ENCODE measurements at regions of chr2 and their contacts with region 1.

Region 1: GRCh38 chr2:226791487-226792081 is 8.0 kb downstream of the IRS1 start:
- DNase-seq: peak; percentile 86
- H3K4me3 Mint-ChIP-seq: peak overlapping the region; percentile 84
- H3K27ac Mint-ChIP-seq: peak overlapping the region; percentile 90
- H3K4me1 Mint-ChIP-seq: peaks cover 36% of the 10 kb centered on the region
- H3K27me3 Mint-ChIP-seq: peaks cover 6% of the 10 kb centered on the region

Region 2: GRCh38 chr2:226489775-226490541 is 301.6 kb before region 1 on chr2:
- intact Hi-C with region 1: loop called (anchors 10 kb)
- DNase-seq: no peak
- H3K4me3 Mint-ChIP-seq: no peak overlapping the region
- H3K27ac Mint-ChIP-seq: no peak overlapping the region
- H3K4me1 Mint-ChIP-seq: peaks cover 2% of the 10 kb centered on the region
- H3K27me3 Mint-ChIP-seq: no peaks in the 10 kb centered on the region

Region 3: GRCh38 chr2:226649871-226650660 is 141.5 kb before region 1 on chr2:
- intact Hi-C with region 1: loop called (anchors 2 kb)
- DNase-seq: peak; percentile 39
- H3K4me3 Mint-ChIP-seq: no peak overlapping the region
- H3K27ac Mint-ChIP-seq: peak overlapping the region; percentile 60
- H3K4me1 Mint-ChIP-seq: peaks cover 33% of the 10 kb centered on the region
- H3K27me3 Mint-ChIP-seq: no peaks in the 10 kb centered on the region

Region 4: GRCh38 chr2:226661789-226662545 is 129.6 kb before region 1 on chr2:
- intact Hi-C with region 1: no loop called
- DNase-seq: no peak
- H3K4me3 Mint-ChIP-seq: no peak overlapping the region
- H3K27ac Mint-ChIP-seq: no peak overlapping the region
- H3K4me1 Mint-ChIP-seq: no peaks in the 10 kb centered on the region
- H3K27me3 Mint-ChIP-seq: peaks cover 31% of the 10 kb centered on the region